ENCODE measurements at regions of chr12 and their contacts with region 1.

Region 1: GRCh38 chr12:27034607-27035293 is 12.4 kb downstream of the MED21 start:
- DNase-seq: no peak
- ATAC-seq: no peak
- H3K4me3 ChIP-seq: no peak overlapping the region
- H3K27ac ChIP-seq: no peak overlapping the region
- H3K4me1 ChIP-seq: peaks cover 11% of the 10 kb centered on the region
- H3K27me3 ChIP-seq: no peaks in the 10 kb centered on the region
- CTCF ChIP-seq: no peak
- EP300 ChIP-seq: no peak
- POLR2A ChIP-seq: no peak
- RAD21 ChIP-seq: no peak

Region 2: GRCh38 chr12:26309646-26310045 is 725.1 kb before region 1 on chr12:
- CTCF ChIA-PET with region 1: no interaction called
- POLR2A ChIA-PET with region 1: no interaction called
- in situ Hi-C with region 1: no loop called
- intact Hi-C with region 1: no loop called
- DNase-seq: no peak
- ATAC-seq: no peak
- H3K4me3 ChIP-seq: no peak overlapping the region
- H3K27ac ChIP-seq: no peak overlapping the region
- H3K4me1 ChIP-seq: no peaks in the 10 kb centered on the region
- H3K27me3 ChIP-seq: no peaks in the 10 kb centered on the region
- CTCF ChIP-seq: no peak
- EP300 ChIP-seq: no peak
- POLR2A ChIP-seq: no peak
- RAD21 ChIP-seq: no peak

Region 3: DNA sequence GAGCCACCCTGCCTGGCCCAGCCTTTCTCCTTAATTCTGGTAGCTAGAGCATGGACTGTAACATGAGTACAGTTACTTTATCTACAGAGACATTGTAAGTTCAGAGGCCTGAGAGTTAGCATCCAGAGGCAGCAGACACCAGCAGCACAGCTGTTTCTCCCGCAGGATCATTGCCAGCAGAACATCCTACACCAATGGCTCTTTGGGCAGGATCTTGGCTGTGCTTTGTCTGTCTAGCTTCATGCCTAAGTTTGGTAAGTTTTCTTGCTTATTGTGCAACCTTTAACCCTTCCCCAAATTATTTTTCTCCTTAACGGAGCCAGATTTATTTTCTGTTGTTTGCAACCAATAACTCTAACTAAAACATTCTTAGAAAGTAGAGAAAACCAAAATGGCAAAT is 26.0 kb after region 1 on chr12:
- CTCF ChIA-PET with region 1: no interaction called
- POLR2A ChIA-PET with region 1: no interaction called
- in situ Hi-C with region 1: no loop called
- intact Hi-C with region 1: no loop called
- DNase-seq: no peak
- ATAC-seq: no peak
- H3K4me3 ChIP-seq: no peak overlapping the region
- H3K27ac ChIP-seq: no peak overlapping the region
- H3K4me1 ChIP-seq: no peaks in the 10 kb centered on the region
- H3K27me3 ChIP-seq: no peaks in the 10 kb centered on the region
- CTCF ChIP-seq: no peak
- EP300 ChIP-seq: no peak
- POLR2A ChIP-seq: no peak
- RAD21 ChIP-seq: no peak

Region 4: GRCh38 chr12:27123642-27124041 is 88.9 kb after region 1 on chr12:
- CTCF ChIA-PET with region 1: interaction called, 4 read pairs
- POLR2A ChIA-PET with region 1: no interaction called
- in situ Hi-C with region 1: no loop called
- intact Hi-C with region 1: loop called (anchors 5 kb)
- DNase-seq: peak; percentile 27
- ATAC-seq: no peak
- H3K4me3 ChIP-seq: no peak overlapping the region
- H3K27ac ChIP-seq: no peak overlapping the region
- H3K4me1 ChIP-seq: no peaks in the 10 kb centered on the region
- H3K27me3 ChIP-seq: no peaks in the 10 kb centered on the region
- CTCF ChIP-seq: peak; percentile 44
- EP300 ChIP-seq: no peak
- POLR2A ChIP-seq: no peak
- RAD21 ChIP-seq: no peak

Region 5: GRCh38 chr12:27142101-27142721 is 107.5 kb after region 1 on chr12:
- CTCF ChIA-PET with region 1: interaction called, 7 read pairs
- POLR2A ChIA-PET with region 1: no interaction called
- in situ Hi-C with region 1: no loop called
- intact Hi-C with region 1: loop called (anchors 1 kb)
- DNase-seq: peak; percentile 53
- ATAC-seq: peak; percentile 95
- H3K4me3 ChIP-seq: no peak overlapping the region
- H3K27ac ChIP-seq: no peak overlapping the region
- H3K4me1 ChIP-seq: no peaks in the 10 kb centered on the region
- H3K27me3 ChIP-seq: no peaks in the 10 kb centered on the region
- CTCF ChIP-seq: peak; percentile 82
- EP300 ChIP-seq: no peak
- POLR2A ChIP-seq: no peak
- RAD21 ChIP-seq: peak; percentile 10; the same call in 1 of the 2 replicates

Measured in HepG2 (cell line).